Ascending aorta (tissue), 2 donors: ENCODE measurements at regions of chr1 and their contacts with region 1.

Region 1: DNA sequence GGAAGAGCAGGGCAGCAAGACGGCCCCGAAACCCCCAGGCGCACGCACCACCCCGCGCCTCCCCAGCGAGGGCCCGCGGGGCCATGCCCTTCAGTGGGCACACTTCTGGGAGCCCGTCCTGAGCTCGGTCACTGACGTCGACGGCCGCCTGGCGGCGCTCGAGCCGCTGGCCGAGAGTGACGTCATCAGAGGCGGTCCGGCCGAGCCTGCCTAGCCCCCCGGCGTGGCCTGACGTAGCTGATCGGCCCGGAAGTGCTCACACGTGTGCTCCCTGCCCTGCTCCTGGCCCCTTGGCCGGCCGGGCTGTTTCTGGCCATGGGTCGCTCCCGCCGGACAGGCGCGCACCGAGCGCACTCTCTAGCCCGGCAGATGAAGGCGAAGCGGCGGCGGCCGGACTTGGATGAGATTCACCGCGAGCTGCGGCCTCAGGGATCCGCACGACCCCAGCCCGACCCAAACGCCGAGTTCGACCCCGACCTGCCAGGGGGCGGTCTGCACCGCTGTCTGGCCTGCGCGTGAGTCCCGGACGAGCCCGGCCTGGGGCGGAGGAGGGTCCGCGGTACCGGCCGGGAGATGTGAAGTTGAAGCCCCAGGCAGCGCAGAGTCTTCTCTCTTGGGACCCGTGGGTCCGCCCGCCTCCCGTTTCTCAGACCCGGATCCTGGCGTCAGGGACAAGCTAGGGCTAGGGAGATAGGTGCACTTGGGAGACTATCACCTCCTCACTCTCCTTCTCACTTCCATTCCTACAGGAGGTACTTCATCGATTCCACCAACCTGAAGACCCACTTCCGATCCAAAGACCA is at the start of gene ZNF593:
- DNase-seq: peak; percentile 35 to 96
- H3K4me3 ChIP-seq: peak within 1 kb of the TSS; percentile 63 to 90
- H3K27ac ChIP-seq: peak within 1 kb of the TSS; percentile 41 to 54
- H3K4me1 ChIP-seq: peaks cover 0 to 6% of the 10 kb centered on the region in 2 donors
- H3K27me3 ChIP-seq: no peaks in the 10 kb centered on the region
- CTCF ChIP-seq: peak; percentile 91 to 96 (median 93)
- total RNA-seq, gene ZNF593: 90.0 TPM

Region 2: GRCh38 chr1:25904943-25905679 is 264.8 kb before region 1 on chr1:
- intact Hi-C with region 1: loop called (anchors 5 kb)
- DNase-seq: peak; percentile 81 to 97
- H3K4me3 ChIP-seq: peak overlapping the region; percentile 74 to 90
- H3K27ac ChIP-seq: peak overlapping the region; percentile 32 to 65
- H3K4me1 ChIP-seq: peaks cover 0 to 13% of the 10 kb centered on the region in 2 donors
- H3K27me3 ChIP-seq: no peaks in the 10 kb centered on the region
- CTCF ChIP-seq: no peak

Region 3: DNA sequence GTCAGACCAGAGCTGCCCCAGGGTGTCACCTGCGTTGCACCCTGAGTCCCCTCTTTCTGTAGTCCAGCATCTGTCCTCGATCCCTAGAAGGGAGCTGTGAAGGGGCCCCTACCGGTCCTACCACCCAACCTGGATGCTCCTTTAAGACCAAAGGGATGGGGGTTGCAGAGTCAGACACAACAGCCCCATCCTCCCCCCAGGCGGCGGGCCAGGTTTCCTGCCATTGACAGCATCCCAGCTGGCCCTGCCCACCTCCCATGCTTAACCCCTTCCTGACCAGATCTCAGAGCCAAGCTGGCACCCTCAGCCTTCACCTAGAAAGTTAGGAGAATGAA is 13.2 kb before region 1 on chr1:
- intact Hi-C with region 1: no loop called
- DNase-seq: no peak
- H3K4me3 ChIP-seq: no peak overlapping the region
- H3K27ac ChIP-seq: peak overlapping the region; percentile 22 to 44
- H3K4me1 ChIP-seq: peaks cover 5 to 6% of the 10 kb centered on the region in 2 donors
- H3K27me3 ChIP-seq: no peaks in the 10 kb centered on the region
- CTCF ChIP-seq: no peak

Region 4: GRCh38 chr1:26321315-26322041 is 151.6 kb after region 1 on chr1:
- intact Hi-C with region 1: loop called (anchors 2 kb)
- DNase-seq: peak; percentile 69 to 97
- H3K4me3 ChIP-seq: no peak overlapping the region
- H3K27ac ChIP-seq: no peak overlapping the region
- H3K4me1 ChIP-seq: peaks cover 0 to 3% of the 10 kb centered on the region in 2 donors
- H3K27me3 ChIP-seq: no peaks in the 10 kb centered on the region
- CTCF ChIP-seq: peak; percentile 86 to 95 (median 90)

Region 5: GRCh38 chr1:26431979-26432695 is 262.3 kb after region 1 on chr1 and contains the start of gene DHDDS:
- intact Hi-C with region 1: loop called (anchors 10 kb)
- DNase-seq: peak; percentile 91 to 98
- H3K4me3 ChIP-seq: peak within 1 kb of the TSS; percentile 44 to 85
- H3K27ac ChIP-seq: peak within 1 kb of the TSS; percentile 10 to 69
- H3K4me1 ChIP-seq: peaks cover 3 to 9% of the 10 kb centered on the region in 2 donors
- H3K27me3 ChIP-seq: no peaks in the 10 kb centered on the region
- CTCF ChIP-seq: no peak
- total RNA-seq, gene DHDDS: 54.2 TPM